Psoas muscle (tissue), 8 donors: ENCODE measurements at regions of chr20 and their contacts with region 1.

Region 1: DNA sequence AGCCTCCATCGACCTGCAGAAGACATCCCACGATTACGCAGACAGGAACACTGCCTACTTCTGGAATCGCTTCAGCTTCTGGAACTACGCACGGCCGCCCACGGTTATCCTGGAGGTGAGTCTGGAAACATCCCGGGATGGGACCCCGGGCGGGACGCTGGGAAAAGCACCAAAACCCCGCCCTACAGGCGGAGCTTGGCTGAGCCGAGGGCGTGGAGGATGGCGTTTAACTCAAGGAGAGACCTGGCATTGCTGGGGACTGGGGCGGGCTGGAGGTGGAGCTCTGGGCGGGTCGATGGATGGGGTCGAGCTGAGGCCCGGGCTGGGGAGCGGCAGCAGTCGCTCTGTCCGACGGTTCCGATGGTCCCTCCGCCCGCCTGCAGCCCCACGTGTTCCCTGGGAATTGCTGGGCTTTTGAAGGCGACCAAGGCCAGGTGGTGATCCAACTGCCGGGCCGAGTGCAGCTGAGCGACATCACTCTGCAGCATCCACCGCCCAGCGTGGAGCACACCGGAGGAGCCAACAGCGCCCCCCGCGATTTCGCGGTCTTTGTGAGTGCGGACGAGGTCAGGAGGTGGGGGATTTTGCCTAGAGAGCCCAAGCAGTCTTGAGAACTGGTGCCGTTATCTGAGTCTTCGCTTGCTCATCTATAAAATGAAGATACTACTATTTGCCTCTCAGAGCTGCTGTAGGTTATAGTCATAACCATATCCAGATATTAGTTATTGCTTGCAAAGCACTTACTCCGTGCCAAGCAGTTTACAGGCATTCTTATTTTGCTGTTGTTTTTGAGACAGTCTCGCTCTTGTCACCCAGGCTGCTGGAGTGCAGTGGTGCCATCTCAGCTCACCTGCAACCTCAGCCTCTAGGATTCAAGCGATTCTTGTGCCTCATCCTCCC is 3.8 kb downstream of the SPAG4 start:
- DNase-seq: peak; percentile 78 to 80
- ATAC-seq: peak in 1 of 4 donors; percentile 17
- H3K4me3 ChIP-seq: peak overlapping the region; percentile 76
- H3K27ac ChIP-seq: no peak overlapping the region
- H3K4me1 ChIP-seq: peaks cover 14% of the 10 kb centered on the region
- H3K27me3 ChIP-seq: no peaks in the 10 kb centered on the region
- CTCF ChIP-seq: no peak

Region 2: DNA sequence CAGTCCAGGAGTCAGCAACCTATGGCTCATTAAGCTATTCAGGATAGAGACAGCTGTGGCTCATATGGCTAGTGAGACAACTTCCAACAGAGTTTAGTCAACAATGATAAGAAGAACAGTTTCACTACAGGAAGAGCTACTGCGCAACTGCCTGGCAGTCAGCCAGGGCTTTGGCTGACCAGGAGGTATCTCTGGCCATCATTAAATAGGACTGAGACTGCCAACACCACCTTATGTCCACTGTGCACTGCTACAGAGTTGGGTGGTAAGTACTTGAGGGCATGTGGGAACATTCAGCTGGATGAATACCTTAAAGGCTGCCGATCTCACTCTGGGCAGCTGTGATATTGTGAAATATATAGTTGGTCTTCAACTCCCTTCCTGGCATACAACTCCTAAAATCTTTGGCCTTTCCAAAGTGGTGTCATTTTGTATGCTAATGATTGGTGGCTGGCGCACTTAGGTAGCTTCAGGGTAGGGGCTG is 275.1 kb before region 1 on chr20:
- intact Hi-C with region 1: no loop called
- DNase-seq: peak; percentile 63 to 76
- ATAC-seq: peak; percentile 82 to 89 (median 85)
- H3K4me3 ChIP-seq: peak overlapping the region; percentile 44
- H3K27ac ChIP-seq: peak overlapping the region; percentile 69
- H3K4me1 ChIP-seq: peaks cover 29% of the 10 kb centered on the region
- H3K27me3 ChIP-seq: no peaks in the 10 kb centered on the region
- CTCF ChIP-seq: no peak

Region 3: GRCh38 chr20:35561268-35561667 is 58.2 kb before region 1 on chr20:
- intact Hi-C with region 1: no loop called
- DNase-seq: peak in 1 of 2 donors; percentile 47
- ATAC-seq: peak; percentile 39 to 70 (median 52)
- H3K4me3 ChIP-seq: no peak overlapping the region
- H3K27ac ChIP-seq: no peak overlapping the region
- H3K4me1 ChIP-seq: no peaks in the 10 kb centered on the region
- H3K27me3 ChIP-seq: no peaks in the 10 kb centered on the region
- CTCF ChIP-seq: no peak

Region 4: GRCh38 chr20:35664544-35665221 is 45.2 kb after region 1 on chr20 and contains the starts of genes CPNE1 and RBM12:
- intact Hi-C with region 1: loop called (anchors 5 kb)
- DNase-seq: peak; percentile 93 to 96
- ATAC-seq: peak; percentile 96 to 97 (median 96)
- H3K4me3 ChIP-seq: peak within 1 kb of the TSS; percentile 75
- H3K27ac ChIP-seq: peak within 1 kb of the TSS; percentile 98
- H3K4me1 ChIP-seq: peaks cover 34% of the 10 kb centered on the region
- H3K27me3 ChIP-seq: no peaks in the 10 kb centered on the region
- CTCF ChIP-seq: no peak
- total RNA-seq, gene CPNE1: 55.9 to 75.4 (median 67.1) TPM
- total RNA-seq, gene RBM12: 20.8 to 61.5 (median 45.5) TPM